ENCODE measurements at regions of chrX and their contacts with region 1.

Region 1: DNA sequence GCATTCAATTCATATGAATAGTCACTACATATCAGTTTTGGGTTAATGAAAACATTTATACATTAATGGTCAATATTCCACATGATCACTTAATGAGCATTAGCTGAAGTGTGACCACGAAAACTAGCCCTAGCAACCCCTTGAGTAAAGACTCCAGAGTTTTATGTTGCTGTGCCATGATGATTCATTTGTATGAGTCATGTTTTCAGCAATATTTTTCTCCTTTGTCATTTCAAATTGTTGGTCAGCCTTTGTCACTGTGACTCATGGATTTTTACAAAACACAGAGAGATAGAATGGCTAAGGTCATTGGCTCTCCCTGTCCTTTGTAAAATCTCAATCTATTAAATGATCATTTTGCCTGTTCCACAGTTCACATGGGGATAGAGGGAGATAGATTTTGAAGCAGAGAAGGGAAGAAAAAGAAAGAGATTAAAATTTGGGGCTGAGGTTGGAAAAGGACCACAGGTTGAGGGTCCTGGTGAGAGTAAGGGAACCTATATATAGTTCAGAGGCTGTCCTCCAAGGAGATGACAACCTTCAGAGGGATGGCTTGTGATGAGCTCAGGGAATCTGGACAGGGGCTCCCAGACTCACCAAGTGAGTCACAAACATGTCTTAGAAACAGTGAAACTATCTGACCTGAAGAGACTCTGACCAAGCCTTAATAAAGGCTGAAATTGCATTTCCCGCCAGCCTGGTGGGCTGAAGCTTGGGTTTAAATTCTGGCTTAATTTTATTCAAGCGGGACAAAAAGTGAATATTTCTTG is 25.6 kb downstream of the NR0B1 start:
- DNase-seq: no peak
- ATAC-seq: peak in 1 of 8 donors; percentile 59
- H3K4me3 ChIP-seq: no peak overlapping the region
- H3K27ac ChIP-seq: no peak overlapping the region
- H3K4me1 ChIP-seq: no peaks in the 10 kb centered on the region
- H3K27me3 ChIP-seq: peaks cover 0 to 11% (median 0%) of the 10 kb centered on the region in 7 donors
- CTCF ChIP-seq: no peak

Region 2: DNA sequence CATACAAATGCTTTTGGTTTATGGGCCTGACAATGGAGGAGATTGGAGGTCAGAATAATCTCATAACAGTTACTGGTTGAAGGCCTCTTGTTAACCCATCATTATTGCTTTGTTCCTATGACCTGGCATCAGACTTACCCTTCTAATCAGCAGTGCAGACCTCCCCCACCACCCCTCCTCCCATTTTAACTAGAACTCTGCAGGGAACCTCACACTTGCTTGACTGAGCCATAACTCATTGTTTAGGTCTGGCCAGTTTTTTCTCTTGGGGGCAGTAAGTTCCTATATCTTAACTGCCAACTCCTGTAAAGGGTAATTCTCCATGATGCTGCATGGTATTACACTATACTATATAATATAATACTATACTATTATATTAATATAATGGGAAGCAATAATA is 1087.1 kb before region 1 on chrX:
- intact Hi-C with region 1: loop called in 1 of 10 experiments (anchors 5 kb)
- DNase-seq: no peak
- ATAC-seq: no peak
- H3K4me3 ChIP-seq: no peak overlapping the region
- H3K27ac ChIP-seq: no peak overlapping the region
- H3K4me1 ChIP-seq: no peaks in the 10 kb centered on the region
- H3K27me3 ChIP-seq: no peaks in the 10 kb centered on the region
- CTCF ChIP-seq: no peak